PC-9 (cell line): ENCODE measurements at regions of chr19 and their contacts with region 1.

Region 1: DNA sequence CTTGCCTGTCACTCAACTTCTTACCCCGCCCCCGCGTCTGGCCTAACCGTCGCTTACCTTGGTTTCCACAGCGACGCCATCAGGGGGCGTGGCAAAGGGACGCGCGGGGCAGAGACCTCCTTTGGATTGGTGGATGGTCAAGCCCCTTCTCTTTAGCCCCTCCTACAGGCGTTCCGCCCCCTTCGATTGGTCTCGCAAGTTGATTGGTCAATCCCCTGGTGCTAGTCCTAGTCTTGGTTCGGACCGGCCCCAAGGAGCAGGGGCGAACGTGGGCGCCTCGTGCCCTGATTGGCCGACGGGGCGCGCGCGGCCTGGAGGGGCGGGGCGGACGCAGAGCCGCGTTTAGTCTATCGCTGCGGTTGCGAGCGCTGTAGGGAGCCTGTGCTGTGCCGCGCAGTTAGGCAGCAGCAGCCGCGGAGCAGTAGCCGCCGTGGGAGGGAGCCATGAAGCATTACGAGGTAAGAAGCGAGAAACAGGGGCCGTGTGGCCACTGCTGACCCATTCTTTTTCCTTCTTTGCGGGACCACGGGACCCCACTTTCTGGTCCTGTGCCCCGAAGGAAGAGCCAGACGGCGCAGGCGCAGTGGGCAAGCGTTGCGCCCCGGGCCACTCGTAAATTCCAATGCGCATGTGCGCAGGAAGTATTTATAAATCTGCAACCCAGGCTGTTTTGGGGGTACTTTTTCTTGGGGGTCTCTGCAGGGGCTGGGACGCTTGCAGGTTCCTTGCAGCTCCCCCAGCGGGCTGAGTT is at the start of gene TECR:
- DNase-seq: peak; percentile 99 to 100
- H3K4me3 ChIP-seq: peak within 1 kb of the TSS; percentile 76
- H3K27ac ChIP-seq: peak within 1 kb of the TSS; percentile 24
- H3K4me1 ChIP-seq: peaks cover 12% of the 10 kb centered on the region
- H3K27me3 ChIP-seq: no peaks in the 10 kb centered on the region
- CTCF ChIP-seq: no peak
- total RNA-seq, gene TECR: 212 and 294 TPM in 2 replicates

Region 2: DNA sequence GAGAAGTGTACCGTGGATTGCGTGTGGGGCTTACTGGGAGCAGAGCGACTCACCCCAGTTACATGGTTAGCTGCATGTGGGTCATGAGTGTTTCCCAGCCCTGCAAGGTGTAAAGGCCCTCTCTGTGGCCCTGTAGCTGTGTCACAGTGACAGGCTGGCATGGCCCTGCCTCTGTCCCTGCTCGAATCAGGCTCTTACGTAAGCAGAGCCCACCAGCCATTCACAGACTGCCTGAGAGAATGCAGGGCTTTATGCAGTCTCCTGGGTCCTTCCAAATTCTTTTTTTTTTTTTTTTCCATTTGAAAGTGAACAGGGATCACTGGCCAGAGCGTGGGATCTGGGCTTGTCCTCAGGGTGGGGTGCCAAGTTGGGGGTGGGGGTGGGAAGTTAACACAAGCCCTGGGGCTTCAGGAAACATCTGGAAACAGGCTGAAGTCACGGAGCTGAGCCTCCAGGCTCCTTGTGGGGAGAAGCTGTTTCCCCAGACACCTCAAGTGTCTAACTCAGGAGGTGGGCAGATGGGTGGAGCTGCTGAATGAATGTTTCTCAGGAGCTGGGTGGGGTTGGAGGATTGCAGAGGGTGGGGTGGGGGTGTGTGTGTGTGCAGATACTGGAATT is 13.4 kb after region 1 on chr19:
- CTCF ChIA-PET with region 1: no interaction called
- POLR2A ChIA-PET with region 1: interaction called, 13 read pairs
- intact Hi-C with region 1: no loop called
- DNase-seq: peak in 1 of 2 experiments; percentile 56
- H3K4me3 ChIP-seq: no peak overlapping the region
- H3K27ac ChIP-seq: no peak overlapping the region
- H3K4me1 ChIP-seq: peaks cover 3% of the 10 kb centered on the region
- H3K27me3 ChIP-seq: no peaks in the 10 kb centered on the region
- CTCF ChIP-seq: no peak

Region 3: GRCh38 chr19:14556662-14557188 is 27.3 kb after region 1 on chr19:
- CTCF ChIA-PET with region 1: interaction called, 11 read pairs
- POLR2A ChIA-PET with region 1: no interaction called
- intact Hi-C with region 1: no loop called
- DNase-seq: peak; percentile 59 to 77
- H3K4me3 ChIP-seq: no peak overlapping the region
- H3K27ac ChIP-seq: 0 out of 2 replicates have a peak overlapping the region, but pooled peaks have one; percentile 1
- H3K4me1 ChIP-seq: 0 out of 2 replicates have a peak, but pooled peaks cover 6% of the 10 kb centered on the region
- H3K27me3 ChIP-seq: no peaks in the 10 kb centered on the region
- CTCF ChIP-seq: peak; percentile 97

Region 4: DNA sequence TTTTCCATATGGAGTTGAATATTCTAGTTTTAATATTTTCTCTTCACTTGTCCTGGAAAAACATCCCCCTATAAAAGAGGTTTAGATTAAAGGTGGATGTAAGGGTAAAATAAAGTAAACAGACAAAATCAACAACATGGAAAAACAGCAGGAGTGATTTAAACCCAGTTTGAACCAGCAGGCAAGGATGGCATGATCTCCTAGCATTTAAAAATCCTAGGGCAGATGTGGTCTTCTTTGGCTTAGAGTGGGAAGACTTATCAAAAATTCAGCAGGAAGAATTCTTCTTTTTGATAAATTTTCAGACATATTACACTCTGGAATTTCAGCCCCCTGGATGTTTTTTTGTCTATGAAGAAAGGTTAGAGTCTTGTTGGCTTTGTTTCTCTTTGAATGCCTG is 90.0 kb after region 1 on chr19:
- CTCF ChIA-PET with region 1: no interaction called
- POLR2A ChIA-PET with region 1: no interaction called
- intact Hi-C with region 1: no loop called
- DNase-seq: no peak
- H3K4me3 ChIP-seq: no peak overlapping the region
- H3K27ac ChIP-seq: no peak overlapping the region
- H3K4me1 ChIP-seq: no peaks in the 10 kb centered on the region
- H3K27me3 ChIP-seq: 0 out of 2 replicates have a peak, but pooled peaks cover 14% of the 10 kb centered on the region
- CTCF ChIP-seq: no peak

Region 5: DNA sequence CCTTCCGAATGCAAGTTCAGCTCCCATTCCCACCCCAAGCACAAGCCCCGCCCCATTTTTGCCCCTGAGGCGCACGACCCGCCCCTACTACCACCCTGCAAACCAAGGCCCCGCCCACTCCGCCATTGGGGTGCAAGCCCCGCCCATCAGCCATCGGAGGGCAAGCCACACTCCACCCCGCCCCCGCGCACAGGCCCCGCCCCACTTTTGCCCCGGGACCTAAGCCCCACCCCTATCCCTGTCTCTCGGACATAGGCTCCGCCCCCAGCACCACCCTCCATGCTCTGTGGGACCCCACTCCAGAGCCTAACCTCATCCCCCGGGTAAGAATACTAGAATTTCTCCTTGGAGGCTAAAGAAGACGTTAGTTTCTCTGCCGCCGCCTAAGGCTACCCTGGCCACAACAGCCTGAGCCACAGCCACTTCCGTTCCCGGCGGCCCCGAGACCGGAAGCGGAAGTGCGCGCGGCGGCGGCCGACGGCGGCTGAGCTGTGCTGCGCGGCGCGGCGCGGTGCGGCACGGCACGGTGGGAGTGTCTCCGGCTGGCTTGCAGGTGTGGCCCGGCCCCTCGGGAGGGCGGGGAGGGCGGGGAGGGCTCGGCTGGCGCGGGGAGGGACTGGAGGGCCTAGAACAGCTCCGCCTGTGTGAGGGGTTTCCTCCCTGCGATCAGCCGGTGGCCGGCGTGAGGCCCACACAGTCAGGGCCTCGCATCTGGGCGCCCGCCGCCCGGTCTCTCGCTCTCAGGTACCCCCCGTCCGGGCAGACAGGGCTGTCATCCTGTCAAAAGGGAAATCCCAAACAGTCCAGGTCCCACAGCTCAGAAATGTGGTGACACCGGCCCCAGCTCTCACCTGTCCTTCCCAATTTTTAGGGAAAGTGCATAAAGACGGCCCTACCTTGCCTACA is 160.4 kb after region 1 on chr19 and contains the start of gene ZNF333:
- CTCF ChIA-PET with region 1: no interaction called
- POLR2A ChIA-PET with region 1: interaction called, 12 read pairs
- intact Hi-C with region 1: no loop called
- DNase-seq: peak; percentile 78 to 92
- H3K4me3 ChIP-seq: peak within 1 kb of the TSS; percentile 69
- H3K27ac ChIP-seq: peak within 1 kb of the TSS; percentile 88
- H3K4me1 ChIP-seq: peaks cover 16% of the 10 kb centered on the region
- H3K27me3 ChIP-seq: no peaks in the 10 kb centered on the region
- CTCF ChIP-seq: no peak
- total RNA-seq, gene ZNF333: 10.1 and 10.5 TPM in 2 replicates

Region 6: GRCh38 chr19:14809272-14810057 is 280.0 kb after region 1 on chr19:
- CTCF ChIA-PET with region 1: no interaction called
- POLR2A ChIA-PET with region 1: no interaction called
- intact Hi-C with region 1: no loop called
- DNase-seq: no peak
- H3K4me3 ChIP-seq: no peak overlapping the region
- H3K27ac ChIP-seq: no peak overlapping the region
- H3K4me1 ChIP-seq: no peaks in the 10 kb centered on the region
- H3K27me3 ChIP-seq: no peaks in the 10 kb centered on the region
- CTCF ChIP-seq: no peak

Region 7: GRCh38 chr19:14943601-14944000 is 414.2 kb after region 1 on chr19:
- CTCF ChIA-PET with region 1: no interaction called
- POLR2A ChIA-PET with region 1: no interaction called
- intact Hi-C with region 1: no loop called
- DNase-seq: peak in 1 of 2 experiments; percentile 98
- H3K4me3 ChIP-seq: no peak overlapping the region
- H3K27ac ChIP-seq: peak overlapping the region; percentile 87
- H3K4me1 ChIP-seq: peaks cover 24% of the 10 kb centered on the region
- H3K27me3 ChIP-seq: no peaks in the 10 kb centered on the region
- CTCF ChIP-seq: no peak